ENCODE measurements at regions of chr9 and their contacts with region 1.

Region 1: GRCh38 chr9:123656565-123656964 is 273.4 kb downstream of the DENND1A start:
- DNase-seq: no peak
- H3K4me3 ChIP-seq: no peak overlapping the region
- H3K27ac ChIP-seq: no peak overlapping the region
- H3K4me1 ChIP-seq: no peaks in the 10 kb centered on the region
- H3K27me3 ChIP-seq: no peaks in the 10 kb centered on the region
- CTCF ChIP-seq: no peak

Region 2: DNA sequence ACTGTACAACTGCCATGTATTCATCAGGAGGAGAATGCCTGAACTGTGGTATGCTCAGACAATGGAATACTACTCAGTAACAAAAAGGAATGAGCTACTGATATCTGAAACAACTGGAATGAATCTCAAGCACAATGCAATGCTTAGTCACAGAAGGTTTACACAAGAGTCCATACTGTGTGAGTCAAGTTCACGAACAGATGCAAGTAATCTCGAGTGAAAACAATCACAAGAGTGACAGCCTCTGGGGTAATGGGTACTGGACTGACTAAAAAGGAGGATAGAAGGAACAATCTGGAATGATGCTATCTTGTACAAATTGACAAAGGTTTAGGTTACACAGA is 1303.8 kb after region 1 on chr9:
- CTCF ChIA-PET with region 1: no interaction called
- POLR2A ChIA-PET with region 1: interaction called, 13 read pairs
- intact Hi-C with region 1: no loop called
- DNase-seq: no peak
- H3K4me3 ChIP-seq: no peak overlapping the region
- H3K27ac ChIP-seq: no peak overlapping the region
- H3K4me1 ChIP-seq: no peaks in the 10 kb centered on the region
- H3K27me3 ChIP-seq: no peaks in the 10 kb centered on the region
- CTCF ChIP-seq: no peak